ENCODE measurements at regions of chr5 and their contacts with region 1.

Region 1: DNA sequence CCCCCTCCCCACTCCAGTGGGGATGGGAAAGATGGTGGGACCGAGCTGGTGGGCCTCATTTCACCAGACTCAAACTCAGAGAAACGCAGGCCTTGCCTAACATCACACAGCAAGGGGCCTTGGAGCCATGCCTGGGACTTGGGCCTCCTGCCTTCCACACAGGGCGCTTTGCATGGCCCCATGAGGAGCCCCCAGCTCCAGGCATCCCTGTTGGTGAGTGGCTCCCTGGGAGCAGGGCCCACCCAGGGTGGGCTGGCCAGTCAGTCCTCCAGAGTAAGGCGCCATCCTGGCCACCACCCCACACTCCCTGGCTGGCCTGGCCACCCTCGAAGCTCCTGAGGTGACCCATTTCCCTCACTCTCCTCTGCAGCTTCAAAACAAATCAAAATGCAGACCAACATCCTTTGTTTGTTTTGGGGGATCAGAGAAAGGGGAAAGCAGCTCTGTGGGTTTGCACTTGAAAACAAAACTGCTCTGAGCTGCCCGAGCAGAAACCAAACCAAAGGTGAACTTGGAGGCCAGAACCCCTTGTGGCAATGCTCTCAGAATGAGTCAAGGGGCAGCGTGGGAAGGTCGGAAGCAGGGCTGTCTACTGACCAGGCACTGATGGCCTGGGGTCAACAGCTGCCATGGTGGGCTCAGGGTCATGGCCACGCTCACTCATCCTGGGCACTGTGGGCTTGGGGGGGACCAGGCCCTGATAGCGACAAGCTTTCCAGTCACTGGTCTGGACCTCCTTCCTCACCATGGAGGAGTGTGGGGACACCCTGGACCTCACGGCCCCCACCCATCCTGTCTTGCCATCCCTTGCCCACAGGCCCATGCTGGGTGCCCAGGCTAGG is 37.0 kb upstream of the VDAC1 start:
- DNase-seq: peak; percentile 74
- ATAC-seq: peak; percentile 88
- H3K4me3 ChIP-seq: no peak overlapping the region
- H3K27ac ChIP-seq: peak overlapping the region; percentile 33; the same call in 1 of the 2 replicates
- H3K4me1 ChIP-seq: peaks cover 24% of the 10 kb centered on the region
- H3K27me3 ChIP-seq: no peaks in the 10 kb centered on the region
- CTCF ChIP-seq: no peak
- EP300 ChIP-seq: peak; percentile 73 to 90
- POLR2A ChIP-seq: no peak
- RAD21 ChIP-seq: 0 out of 2 replicates have a peak, but pooled peaks have one; percentile 6

Region 2: GRCh38 chr5:133773247-133774202 is 268.3 kb before region 1 on chr5:
- CTCF ChIA-PET with region 1: no interaction called
- POLR2A ChIA-PET with region 1: no interaction called
- RAD21 ChIA-PET with region 1: no interaction called
- SMC1A ChIA-PET with region 1: no interaction called
- in situ Hi-C with region 1: no loop called
- intact Hi-C with region 1: no loop called
- DNase-seq: no peak
- ATAC-seq: no peak; the same call in 2 of the 3 replicates
- H3K4me3 ChIP-seq: no peak overlapping the region
- H3K27ac ChIP-seq: no peak overlapping the region
- H3K4me1 ChIP-seq: no peaks in the 10 kb centered on the region
- H3K27me3 ChIP-seq: no peaks in the 10 kb centered on the region
- CTCF ChIP-seq: peak in 1 of 3 experiments; percentile 14; a peak in 1 of 6 replicates
- EP300 ChIP-seq: no peak
- POLR2A ChIP-seq: no peak
- RAD21 ChIP-seq: no peak

Region 3: GRCh38 chr5:133950816-133951612 is 90.8 kb before region 1 on chr5:
- CTCF ChIA-PET with region 1: no interaction called
- POLR2A ChIA-PET with region 1: no interaction called
- RAD21 ChIA-PET with region 1: no interaction called
- SMC1A ChIA-PET with region 1: no interaction called
- in situ Hi-C with region 1: no loop called
- intact Hi-C with region 1: no loop called
- DNase-seq: no peak
- ATAC-seq: no peak
- H3K4me3 ChIP-seq: no peak overlapping the region
- H3K27ac ChIP-seq: no peak overlapping the region
- H3K4me1 ChIP-seq: no peaks in the 10 kb centered on the region
- H3K27me3 ChIP-seq: no peaks in the 10 kb centered on the region
- CTCF ChIP-seq: no peak
- EP300 ChIP-seq: no peak
- POLR2A ChIP-seq: no peak
- RAD21 ChIP-seq: no peak

Region 4: GRCh38 chr5:133977161-133977787 is 64.5 kb before region 1 on chr5:
- CTCF ChIA-PET with region 1: interaction called, 10 read pairs
- POLR2A ChIA-PET with region 1: interaction called, 3 read pairs
- RAD21 ChIA-PET with region 1: interaction called, 8 read pairs
- SMC1A ChIA-PET with region 1: interaction called, 4 read pairs
- in situ Hi-C with region 1: no loop called
- intact Hi-C with region 1: no loop called
- DNase-seq: peak; percentile 34
- ATAC-seq: peak; percentile 75
- H3K4me3 ChIP-seq: no peak overlapping the region
- H3K27ac ChIP-seq: peak overlapping the region; percentile 20
- H3K4me1 ChIP-seq: peaks cover 7% of the 10 kb centered on the region
- H3K27me3 ChIP-seq: no peaks in the 10 kb centered on the region
- CTCF ChIP-seq: no peak
- EP300 ChIP-seq: no peak
- POLR2A ChIP-seq: no peak
- RAD21 ChIP-seq: no peak

Region 5: GRCh38 chr5:134053840-134054338 is 12.1 kb after region 1 on chr5:
- CTCF ChIA-PET with region 1: interaction called, 56 read pairs
- POLR2A ChIA-PET with region 1: interaction called, 7 read pairs
- RAD21 ChIA-PET with region 1: interaction called, 11 read pairs
- SMC1A ChIA-PET with region 1: interaction called, 42 read pairs
- in situ Hi-C with region 1: no loop called
- intact Hi-C with region 1: no loop called
- DNase-seq: no peak
- ATAC-seq: peak; percentile 89
- H3K4me3 ChIP-seq: no peak overlapping the region
- H3K27ac ChIP-seq: no peak overlapping the region
- H3K4me1 ChIP-seq: peaks cover 11% of the 10 kb centered on the region
- H3K27me3 ChIP-seq: no peaks in the 10 kb centered on the region
- CTCF ChIP-seq: no peak
- EP300 ChIP-seq: no peak; a peak in 1 of 4 replicates
- POLR2A ChIP-seq: no peak
- RAD21 ChIP-seq: no peak

Region 6: GRCh38 chr5:134101686-134102439 is 60.1 kb after region 1 on chr5:
- CTCF ChIA-PET with region 1: interaction called, 12 read pairs
- POLR2A ChIA-PET with region 1: interaction called, 37 read pairs
- RAD21 ChIA-PET with region 1: no interaction called
- SMC1A ChIA-PET with region 1: interaction called, 177 read pairs
- in situ Hi-C with region 1: loop called (anchors 5 kb)
- intact Hi-C with region 1: loop called (anchors 1 kb)
- DNase-seq: peak; percentile 43
- ATAC-seq: peak; percentile 40
- H3K4me3 ChIP-seq: peak overlapping the region; percentile 28; the same call in 1 of the 2 replicates
- H3K27ac ChIP-seq: peak overlapping the region; percentile 95
- H3K4me1 ChIP-seq: peaks cover 70% of the 10 kb centered on the region
- H3K27me3 ChIP-seq: no peaks in the 10 kb centered on the region
- CTCF ChIP-seq: peak; percentile 79 to 92 (median 80)
- EP300 ChIP-seq: no peak
- POLR2A ChIP-seq: peak; percentile 55
- RAD21 ChIP-seq: peak; percentile 77

Region 7: GRCh38 chr5:134125039-134126015 is 83.5 kb after region 1 on chr5:
- CTCF ChIA-PET with region 1: interaction called, 76 read pairs
- POLR2A ChIA-PET with region 1: interaction called, 4 read pairs
- RAD21 ChIA-PET with region 1: interaction called, 14 read pairs
- SMC1A ChIA-PET with region 1: interaction called, 14 read pairs
- in situ Hi-C with region 1: no loop called
- intact Hi-C with region 1: no loop called
- DNase-seq: no peak
- ATAC-seq: peak; percentile 41
- H3K4me3 ChIP-seq: no peak overlapping the region
- H3K27ac ChIP-seq: peak overlapping the region; percentile 47
- H3K4me1 ChIP-seq: peaks cover 64% of the 10 kb centered on the region
- H3K27me3 ChIP-seq: no peaks in the 10 kb centered on the region
- CTCF ChIP-seq: no peak
- EP300 ChIP-seq: 0 out of 4 replicates have a peak, but pooled peaks of 1 of the 2 experiments have one; percentile 11
- POLR2A ChIP-seq: no peak
- RAD21 ChIP-seq: no peak

Region 8: DNA sequence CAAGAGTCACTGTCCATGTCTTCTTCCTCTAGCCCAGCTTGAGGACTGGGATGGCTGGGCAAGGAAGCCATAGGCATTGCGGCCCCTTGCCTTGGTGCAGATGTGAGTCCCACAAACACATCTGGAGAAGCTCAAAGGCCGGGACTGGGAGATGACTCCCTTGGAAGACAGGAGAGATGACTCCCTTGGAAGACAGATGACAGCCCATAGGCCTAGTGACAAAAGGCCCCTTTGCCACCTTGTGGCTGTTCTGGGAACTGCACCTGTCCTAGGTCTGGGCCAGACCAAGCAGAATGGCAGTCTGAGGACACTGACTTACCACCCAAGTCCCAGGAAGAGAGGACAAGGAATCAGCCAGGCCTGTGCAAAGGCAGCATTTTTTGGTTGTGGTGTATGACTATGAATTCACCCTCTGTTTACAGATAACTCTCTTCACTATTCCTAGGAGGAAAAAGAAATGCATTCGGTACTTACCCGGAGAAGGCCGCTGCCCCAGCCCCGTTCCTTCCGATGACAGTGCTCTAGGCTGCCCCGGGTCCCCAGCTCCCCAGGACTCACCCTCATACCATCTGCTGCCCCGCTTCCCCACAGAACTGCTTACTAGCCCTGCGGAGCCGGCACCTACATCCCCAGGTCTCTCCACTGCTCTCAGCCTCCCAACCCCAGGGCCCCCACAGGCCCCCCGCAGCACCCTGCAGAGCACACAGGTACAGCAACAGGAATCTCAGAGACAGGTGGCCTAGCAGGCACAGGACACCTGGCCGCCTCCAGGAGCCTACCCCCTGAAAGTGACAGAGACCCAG is 104.2 kb after region 1 on chr5:
- CTCF ChIA-PET with region 1: interaction called, 792 read pairs
- POLR2A ChIA-PET with region 1: interaction called, 15 read pairs
- RAD21 ChIA-PET with region 1: interaction called, 200 read pairs
- SMC1A ChIA-PET with region 1: interaction called, 441 read pairs
- in situ Hi-C with region 1: no loop called
- intact Hi-C with region 1: loop called (anchors 1 kb)
- DNase-seq: no peak
- ATAC-seq: peak; percentile 86
- H3K4me3 ChIP-seq: no peak overlapping the region
- H3K27ac ChIP-seq: 0 out of 2 replicates have a peak overlapping the region, but pooled peaks have one; percentile 22
- H3K4me1 ChIP-seq: peaks cover 3% of the 10 kb centered on the region
- H3K27me3 ChIP-seq: no peaks in the 10 kb centered on the region
- CTCF ChIP-seq: peak; percentile 92 to 96 (median 94)
- EP300 ChIP-seq: no peak
- POLR2A ChIP-seq: no peak
- RAD21 ChIP-seq: peak; percentile 85

Region 9: DNA sequence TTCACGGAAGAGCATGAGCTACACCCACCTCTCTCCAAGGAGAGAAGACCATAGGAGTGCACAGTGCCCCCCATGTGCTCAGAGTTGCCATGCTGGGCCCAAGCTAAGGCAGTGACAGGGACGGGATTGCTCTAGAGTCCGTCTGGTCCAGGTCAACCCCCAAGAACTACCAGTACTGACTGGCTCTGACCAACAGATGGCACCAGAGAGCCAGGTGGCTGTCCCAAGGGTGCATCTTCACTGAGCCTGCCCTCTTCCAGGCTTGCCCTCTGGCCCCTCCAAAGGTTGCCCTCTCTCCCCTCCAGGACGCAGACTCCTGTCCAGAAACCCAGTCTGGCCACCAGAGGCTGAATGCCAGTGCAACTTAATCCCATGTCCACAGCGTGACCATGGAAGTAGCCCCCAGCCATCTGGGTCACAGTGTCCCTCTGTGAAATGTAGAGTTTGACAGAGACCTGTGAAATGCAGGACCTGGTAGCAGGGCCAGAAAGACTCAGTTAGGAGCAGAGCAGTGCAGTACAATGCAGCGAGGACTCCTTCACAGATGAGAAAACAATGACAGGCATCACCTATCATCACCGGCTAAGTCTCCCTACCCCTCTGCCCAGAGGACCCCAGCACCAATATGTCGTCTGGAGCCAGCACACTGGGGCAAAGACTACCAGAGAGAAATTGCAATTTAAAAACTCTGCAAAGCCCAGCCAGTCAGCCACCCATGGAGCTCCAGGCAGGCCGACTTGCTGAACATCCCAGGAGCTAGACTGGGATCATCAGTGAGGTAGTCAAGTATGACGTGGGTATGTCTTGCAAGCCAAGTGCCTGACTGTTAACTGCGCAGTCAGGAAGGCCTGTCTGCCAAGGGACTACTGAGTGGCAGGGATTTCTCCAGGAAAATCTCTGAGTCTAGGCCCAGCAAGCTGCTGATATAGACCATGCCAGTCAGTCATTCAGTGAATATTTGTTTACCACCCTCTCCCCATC is 142.7 kb after region 1 on chr5:
- CTCF ChIA-PET with region 1: interaction called, 16 read pairs
- POLR2A ChIA-PET with region 1: no interaction called
- RAD21 ChIA-PET with region 1: interaction called, 9 read pairs
- SMC1A ChIA-PET with region 1: interaction called, 5 read pairs
- in situ Hi-C with region 1: no loop called
- intact Hi-C with region 1: no loop called
- DNase-seq: peak; percentile 16
- ATAC-seq: peak; percentile 99
- H3K4me3 ChIP-seq: no peak overlapping the region
- H3K27ac ChIP-seq: no peak overlapping the region
- H3K4me1 ChIP-seq: no peaks in the 10 kb centered on the region
- H3K27me3 ChIP-seq: no peaks in the 10 kb centered on the region
- CTCF ChIP-seq: peak; percentile 87 to 97 (median 89)
- EP300 ChIP-seq: no peak
- POLR2A ChIP-seq: no peak
- RAD21 ChIP-seq: peak; percentile 92

Region 10: GRCh38 chr5:134328619-134329018 is 286.8 kb after region 1 on chr5:
- CTCF ChIA-PET with region 1: no interaction called
- POLR2A ChIA-PET with region 1: no interaction called
- RAD21 ChIA-PET with region 1: no interaction called
- SMC1A ChIA-PET with region 1: no interaction called
- in situ Hi-C with region 1: no loop called
- intact Hi-C with region 1: no loop called
- DNase-seq: no peak
- ATAC-seq: no peak
- H3K4me3 ChIP-seq: no peak overlapping the region
- H3K27ac ChIP-seq: no peak overlapping the region
- H3K4me1 ChIP-seq: no peaks in the 10 kb centered on the region
- H3K27me3 ChIP-seq: no peaks in the 10 kb centered on the region; a peak in 1 of 4 replicates
- CTCF ChIP-seq: no peak
- EP300 ChIP-seq: no peak
- POLR2A ChIP-seq: no peak
- RAD21 ChIP-seq: no peak